PC-9 (cell line): ENCODE measurements at regions of chr11 and their contacts with region 1.

Region 1: GRCh38 chr11:74634537-74634936 is 42.2 kb downstream of the POLD3 start:
- DNase-seq: peak; percentile 56 to 69
- H3K4me3 ChIP-seq: no peak overlapping the region
- H3K27ac ChIP-seq: no peak overlapping the region
- H3K4me1 ChIP-seq: peaks cover 8% of the 10 kb centered on the region; the same call in 1 of the 2 replicates
- H3K27me3 ChIP-seq: no peaks in the 10 kb centered on the region
- CTCF ChIP-seq: peak; percentile 66

Region 2: GRCh38 chr11:73939096-73939495 is 695.4 kb before region 1 on chr11:
- CTCF ChIA-PET with region 1: no interaction called
- POLR2A ChIA-PET with region 1: no interaction called
- intact Hi-C with region 1: no loop called
- DNase-seq: no peak
- H3K4me3 ChIP-seq: no peak overlapping the region
- H3K27ac ChIP-seq: no peak overlapping the region
- H3K4me1 ChIP-seq: no peaks in the 10 kb centered on the region
- H3K27me3 ChIP-seq: no peaks in the 10 kb centered on the region
- CTCF ChIP-seq: no peak

Region 3: GRCh38 chr11:74726547-74727182 is 92.1 kb after region 1 on chr11:
- CTCF ChIA-PET with region 1: interaction called, 4 read pairs
- POLR2A ChIA-PET with region 1: no interaction called
- intact Hi-C with region 1: loop called (anchors 1 kb)
- DNase-seq: peak; percentile 67 to 75
- H3K4me3 ChIP-seq: no peak overlapping the region
- H3K27ac ChIP-seq: no peak overlapping the region
- H3K4me1 ChIP-seq: no peaks in the 10 kb centered on the region
- H3K27me3 ChIP-seq: peaks cover 22% of the 10 kb centered on the region
- CTCF ChIP-seq: peak; percentile 96

Region 4: GRCh38 chr11:74739546-74740270 is 105.2 kb after region 1 on chr11:
- CTCF ChIA-PET with region 1: interaction called, 4 read pairs
- POLR2A ChIA-PET with region 1: no interaction called
- intact Hi-C with region 1: loop called (anchors 5 kb)
- DNase-seq: peak; percentile 58 to 66
- H3K4me3 ChIP-seq: no peak overlapping the region
- H3K27ac ChIP-seq: no peak overlapping the region
- H3K4me1 ChIP-seq: 0 out of 2 replicates have a peak, but pooled peaks cover 4% of the 10 kb centered on the region
- H3K27me3 ChIP-seq: no peaks in the 10 kb centered on the region
- CTCF ChIP-seq: peak; percentile 98